Activated CD4-positive, alpha-beta T cell treated with anti-CD3 and anti-CD28 coated beads for 36 hours (primary cell): ENCODE measurements at regions of chr19 and their contacts with region 1.

Region 1: DNA sequence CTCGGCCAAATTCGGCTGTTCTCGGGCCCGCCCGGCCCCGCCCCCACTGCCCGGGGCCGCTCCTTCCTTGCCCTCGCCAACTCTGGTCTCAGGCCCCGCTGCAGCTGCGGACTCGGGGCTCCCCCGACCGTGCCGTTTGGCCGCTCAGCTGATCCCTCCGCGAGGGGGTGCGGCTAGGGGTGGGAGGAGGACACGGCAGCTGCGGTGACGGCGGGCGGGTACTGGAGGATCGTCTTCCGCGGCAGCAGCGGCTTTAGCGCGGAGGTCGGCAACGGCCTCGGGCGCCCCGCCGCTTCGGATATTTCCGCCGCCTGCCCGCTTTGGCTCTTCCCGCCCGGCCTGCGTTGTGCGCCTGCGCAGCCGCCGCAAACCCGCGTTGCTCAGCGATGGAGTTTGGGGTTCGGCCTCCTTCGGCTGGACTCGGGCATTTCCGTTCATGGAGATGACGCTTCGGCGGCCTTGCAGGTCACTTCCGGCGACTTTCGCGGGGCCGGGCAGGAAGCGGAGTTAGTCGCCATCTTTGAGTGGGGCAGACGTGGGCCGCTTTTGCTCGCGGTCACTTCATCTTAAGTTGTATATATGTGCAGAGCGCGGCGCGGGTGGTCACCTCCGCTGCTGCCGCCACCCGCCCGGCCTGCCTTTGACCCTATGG is 338 bp upstream of the UBE2M start:
- DNase-seq: peak; percentile 100
- ATAC-seq: peak; percentile 69
- H3K4me3 Mint-ChIP-seq: peak overlapping the region; percentile 92
- H3K27ac Mint-ChIP-seq: peak overlapping the region; percentile 100
- H3K4me1 Mint-ChIP-seq: peaks cover 65% of the 10 kb centered on the region
- H3K27me3 Mint-ChIP-seq: no peaks in the 10 kb centered on the region

Region 2: GRCh38 chr19:58386576-58387337 is 172.0 kb before region 1 on chr19 and contains the start of gene RPS5:
- CTCF ChIA-PET with region 1: no interaction called
- POLR2A ChIA-PET with region 1: no interaction called
- intact Hi-C with region 1: loop called in 1 of 2 experiments (anchors 1 kb)
- DNase-seq: peak; percentile 97
- ATAC-seq: peak; percentile 96
- H3K4me3 Mint-ChIP-seq: peak within 1 kb of the TSS; percentile 96
- H3K27ac Mint-ChIP-seq: peak within 1 kb of the TSS; percentile 97
- H3K4me1 Mint-ChIP-seq: peaks cover 33% of the 10 kb centered on the region
- H3K27me3 Mint-ChIP-seq: no peaks in the 10 kb centered on the region
- total RNA-seq, gene RPS5: 1,234 to 1,535 TPM